Heart right ventricle (tissue), 16 donors: ENCODE measurements at regions of chr21 and their contacts with region 1.

Region 1: GRCh38 chr21:45140346-45140940 is 66.1 kb downstream of the ADARB1 start:
- DNase-seq: peak; percentile 57 to 70
- ATAC-seq: peak; percentile 77 to 88 (median 86)
- H3K4me3 ChIP-seq: no peak overlapping the region
- H3K27ac ChIP-seq: no peak overlapping the region
- H3K4me1 ChIP-seq: peaks cover 0 to 30% (median 14%) of the 10 kb centered on the region in 9 donors
- H3K27me3 ChIP-seq: no peaks in the 10 kb centered on the region
- CTCF ChIP-seq: peak; percentile 38 to 86 (median 77)

Region 2: DNA sequence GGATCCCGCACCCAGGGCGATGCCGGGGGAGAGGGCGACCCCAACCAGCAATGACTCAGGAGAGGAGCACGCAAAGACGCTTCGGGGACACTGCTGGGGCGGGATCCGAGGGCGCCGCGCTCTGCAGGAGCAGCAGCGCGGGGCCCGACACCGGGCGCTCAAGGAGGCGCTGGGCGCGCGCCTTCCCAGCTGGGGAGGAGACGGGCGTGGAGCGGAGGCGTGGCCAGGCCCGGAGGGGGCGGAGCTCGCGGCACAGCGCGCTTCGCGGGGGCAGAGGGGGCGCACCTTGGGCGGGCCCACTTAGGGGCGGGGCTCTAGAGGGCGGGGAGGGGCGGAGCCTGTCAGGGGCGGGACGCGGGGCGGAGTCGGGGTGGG is 322.9 kb before region 1 on chr21:
- intact Hi-C with region 1: loop called in 1 of 10 experiments (anchors 10 kb)
- DNase-seq: peak; percentile 92 to 96
- ATAC-seq: peak; percentile 91 to 97 (median 95)
- H3K4me3 ChIP-seq: peak overlapping the region; percentile 52 to 97 (median 82)
- H3K27ac ChIP-seq: peak overlapping the region; percentile 37 to 99 (median 96)
- H3K4me1 ChIP-seq: peaks cover 9 to 44% (median 25%) of the 10 kb centered on the region in 9 donors
- H3K27me3 ChIP-seq: no peaks in the 10 kb centered on the region
- CTCF ChIP-seq: peak in 1 of 9 donors; percentile 13

Region 3: GRCh38 chr21:44892536-44893277 is 247.7 kb before region 1 on chr21:
- intact Hi-C with region 1: loop called in 2 of 10 experiments (anchors 5 kb)
- DNase-seq: peak; percentile 62 to 74
- ATAC-seq: peak; percentile 39 to 78 (median 68)
- H3K4me3 ChIP-seq: no peak overlapping the region
- H3K27ac ChIP-seq: peak overlapping the region in 1 of 10 donors; percentile 34
- H3K4me1 ChIP-seq: peaks cover 0 to 10% (median 0%) of the 10 kb centered on the region in 9 donors
- H3K27me3 ChIP-seq: peaks cover 0 to 12% (median 3%) of the 10 kb centered on the region in 7 donors
- CTCF ChIP-seq: peak; percentile 66 to 90 (median 84)

Region 4: GRCh38 chr21:45074048-45074817 is 66.2 kb before region 1 on chr21 and contains the start of gene ADARB1:
- intact Hi-C with region 1: loop called in 1 of 10 experiments (anchors 5 kb)
- DNase-seq: peak; percentile 48 to 78
- ATAC-seq: peak; percentile 51 to 91 (median 72)
- H3K4me3 ChIP-seq: peak within 1 kb of the TSS; percentile 84 to 100 (median 89)
- H3K27ac ChIP-seq: peak within 1 kb of the TSS; percentile 83 to 97 (median 94)
- H3K4me1 ChIP-seq: peaks cover 4 to 48% (median 24%) of the 10 kb centered on the region in 9 donors
- H3K27me3 ChIP-seq: peaks cover 0 to 8% (median 0%) of the 10 kb centered on the region in 7 donors
- CTCF ChIP-seq: no peak
- total RNA-seq, gene ADARB1: 11.8 to 21.2 (median 13.5) TPM

Region 5: GRCh38 chr21:45098867-45099266 is 41.6 kb before region 1 on chr21:
- intact Hi-C with region 1: no loop called
- DNase-seq: no peak
- ATAC-seq: no peak
- H3K4me3 ChIP-seq: no peak overlapping the region
- H3K27ac ChIP-seq: peak overlapping the region in 1 of 10 donors; percentile 6
- H3K4me1 ChIP-seq: peaks cover 22 to 93% (median 62%) of the 10 kb centered on the region in 9 donors
- H3K27me3 ChIP-seq: no peaks in the 10 kb centered on the region
- CTCF ChIP-seq: peak in 7 of 9 donors; percentile 34 to 56 (median 46)

Region 6: GRCh38 chr21:45179568-45180245 is 39.3 kb after region 1 on chr21:
- intact Hi-C with region 1: no loop called
- DNase-seq: no peak
- ATAC-seq: peak in 1 of 8 donors; percentile 14
- H3K4me3 ChIP-seq: no peak overlapping the region
- H3K27ac ChIP-seq: no peak overlapping the region
- H3K4me1 ChIP-seq: no peaks in the 10 kb centered on the region
- H3K27me3 ChIP-seq: no peaks in the 10 kb centered on the region
- CTCF ChIP-seq: no peak

Region 7: DNA sequence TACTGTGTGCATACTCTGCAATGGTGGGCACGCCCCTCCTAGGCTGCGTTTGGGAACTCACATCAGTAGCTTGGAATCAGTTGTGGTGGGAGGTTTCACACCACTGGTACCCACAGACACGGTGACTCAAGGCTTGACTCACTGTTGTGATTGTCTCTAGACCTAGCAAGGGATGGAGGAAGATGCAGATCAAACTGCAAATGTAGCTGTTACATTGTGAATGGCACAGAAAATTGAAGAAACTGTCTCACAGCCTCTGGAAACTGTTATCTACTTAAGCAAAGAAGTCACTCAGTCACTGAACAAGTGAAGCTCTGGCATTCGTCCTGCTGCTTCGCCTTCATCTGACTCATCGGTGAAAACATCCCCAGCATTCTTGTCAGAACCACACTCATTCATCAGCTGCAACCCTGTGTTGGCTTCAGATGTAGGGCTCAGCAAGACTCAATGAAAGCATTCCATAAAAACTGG is 87.8 kb after region 1 on chr21:
- intact Hi-C with region 1: no loop called
- DNase-seq: no peak
- ATAC-seq: peak in 2 of 8 donors; percentile 33 to 65
- H3K4me3 ChIP-seq: no peak overlapping the region
- H3K27ac ChIP-seq: no peak overlapping the region
- H3K4me1 ChIP-seq: peaks cover 0 to 15% (median 0%) of the 10 kb centered on the region in 9 donors
- H3K27me3 ChIP-seq: peaks cover 0 to 21% (median 9%) of the 10 kb centered on the region in 7 donors
- CTCF ChIP-seq: no peak

Region 8: DNA sequence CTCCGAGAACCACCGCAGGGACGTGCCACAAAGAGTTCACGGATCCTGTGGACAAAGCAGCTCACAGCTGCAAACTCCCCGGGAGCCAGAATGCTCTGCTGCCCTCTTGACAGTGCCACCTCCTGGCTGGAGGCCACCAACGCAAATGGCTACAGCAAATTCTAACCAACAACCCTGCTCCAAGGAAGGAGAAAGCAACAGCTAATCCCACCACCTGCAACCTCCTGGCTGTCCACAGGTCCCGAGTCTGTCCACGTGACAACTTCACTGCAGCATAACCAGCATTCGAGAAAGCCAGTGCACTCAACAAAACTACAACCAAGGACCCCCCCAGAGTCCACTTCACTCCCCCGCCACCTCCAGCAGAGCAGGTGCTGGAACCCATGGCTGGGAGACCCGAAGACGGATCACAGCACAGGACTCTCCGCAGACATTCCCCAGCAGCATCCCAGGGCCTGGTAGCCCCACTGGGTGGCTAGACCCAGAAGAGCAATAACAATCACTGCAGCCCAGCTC is 129.9 kb after region 1 on chr21:
- intact Hi-C with region 1: loop called in 2 of 10 experiments (anchors 10 kb)
- DNase-seq: no peak
- ATAC-seq: no peak
- H3K4me3 ChIP-seq: no peak overlapping the region
- H3K27ac ChIP-seq: no peak overlapping the region
- H3K4me1 ChIP-seq: peaks cover 0 to 5% (median 0%) of the 10 kb centered on the region in 9 donors
- H3K27me3 ChIP-seq: no peaks in the 10 kb centered on the region
- CTCF ChIP-seq: peak in 1 of 9 donors; percentile 21

Region 9: GRCh38 chr21:45427331-45428271 is 287.2 kb after region 1 on chr21:
- intact Hi-C with region 1: no loop called
- DNase-seq: no peak
- ATAC-seq: peak in 7 of 8 donors; percentile 17 to 85 (median 57)
- H3K4me3 ChIP-seq: no peak overlapping the region
- H3K27ac ChIP-seq: peak overlapping the region in 1 of 10 donors; percentile 15
- H3K4me1 ChIP-seq: peaks cover 10 to 56% (median 24%) of the 10 kb centered on the region in 9 donors
- H3K27me3 ChIP-seq: no peaks in the 10 kb centered on the region
- CTCF ChIP-seq: no peak

Region 10: GRCh38 chr21:45439161-45439872 is 298.9 kb after region 1 on chr21:
- intact Hi-C with region 1: loop called in 7 of 10 experiments (anchors 1 to 10 kb)
- DNase-seq: peak; percentile 86 to 89
- ATAC-seq: peak; percentile 83 to 90 (median 88)
- H3K4me3 ChIP-seq: peak overlapping the region in 9 of 10 donors; percentile 25 to 55 (median 40)
- H3K27ac ChIP-seq: peak overlapping the region; percentile 54 to 94 (median 81)
- H3K4me1 ChIP-seq: peaks cover 0 to 36% (median 18%) of the 10 kb centered on the region in 9 donors
- H3K27me3 ChIP-seq: no peaks in the 10 kb centered on the region
- CTCF ChIP-seq: peak; percentile 92 to 99 (median 98)